ENCODE measurements at regions of chr1 and their contacts with region 1.

Region 1: GRCh38 chr1:160830321-160831153 is 32.1 kb downstream of the CD244 start:
- DNase-seq: peak; percentile 93
- ATAC-seq: peak; percentile 60
- H3K4me3 ChIP-seq: no peak overlapping the region
- H3K27ac ChIP-seq: no peak overlapping the region
- H3K4me1 ChIP-seq: peaks cover 43% of the 10 kb centered on the region
- H3K27me3 ChIP-seq: no peaks in the 10 kb centered on the region
- CTCF ChIP-seq: peak; percentile 98

Region 2: DNA sequence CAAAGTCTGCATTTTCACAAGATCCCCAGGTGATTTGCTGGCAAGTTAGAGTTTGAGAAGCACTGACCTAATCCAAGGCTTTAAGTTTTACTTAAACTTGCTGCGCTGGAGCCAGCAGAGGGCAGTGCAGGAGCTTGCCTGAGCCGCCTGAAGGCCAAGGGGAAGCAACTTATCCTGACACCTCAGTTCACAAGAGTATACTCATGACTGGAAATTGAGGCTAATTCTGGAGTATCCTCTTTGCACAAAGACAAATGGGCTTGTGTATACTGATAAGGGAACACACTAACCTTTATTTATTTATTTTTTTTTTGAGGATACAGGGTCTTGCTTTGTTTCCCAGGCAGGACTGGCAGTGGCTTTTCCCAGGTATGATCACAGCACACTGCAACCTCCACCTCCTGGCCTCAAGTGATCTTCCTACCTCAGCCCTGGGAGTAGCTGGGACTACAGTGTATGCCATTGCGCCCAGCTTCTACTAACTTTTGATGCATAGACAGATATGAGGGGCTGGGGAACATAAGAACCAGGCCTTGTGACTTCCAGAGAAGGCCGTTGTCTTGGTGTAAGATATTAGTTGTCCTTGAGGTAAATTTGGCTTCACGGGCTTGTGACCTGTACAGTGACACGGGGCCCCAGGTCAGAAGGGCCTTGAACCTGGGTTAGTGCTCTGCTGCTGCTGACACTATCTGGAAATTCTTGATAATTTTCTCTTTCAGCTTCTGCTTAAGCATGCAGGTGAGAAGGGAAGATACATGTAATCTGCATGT is 154.7 kb before region 1 on chr1:
- CTCF ChIA-PET with region 1: no interaction called
- POLR2A ChIA-PET with region 1: no interaction called
- intact Hi-C with region 1: loop called (anchors 1 kb)
- DNase-seq: peak; percentile 78
- ATAC-seq: peak; percentile 99
- H3K4me3 ChIP-seq: no peak overlapping the region
- H3K27ac ChIP-seq: no peak overlapping the region
- H3K4me1 ChIP-seq: no peaks in the 10 kb centered on the region
- H3K27me3 ChIP-seq: peaks cover 60% of the 10 kb centered on the region
- CTCF ChIP-seq: peak; percentile 95

Region 3: DNA sequence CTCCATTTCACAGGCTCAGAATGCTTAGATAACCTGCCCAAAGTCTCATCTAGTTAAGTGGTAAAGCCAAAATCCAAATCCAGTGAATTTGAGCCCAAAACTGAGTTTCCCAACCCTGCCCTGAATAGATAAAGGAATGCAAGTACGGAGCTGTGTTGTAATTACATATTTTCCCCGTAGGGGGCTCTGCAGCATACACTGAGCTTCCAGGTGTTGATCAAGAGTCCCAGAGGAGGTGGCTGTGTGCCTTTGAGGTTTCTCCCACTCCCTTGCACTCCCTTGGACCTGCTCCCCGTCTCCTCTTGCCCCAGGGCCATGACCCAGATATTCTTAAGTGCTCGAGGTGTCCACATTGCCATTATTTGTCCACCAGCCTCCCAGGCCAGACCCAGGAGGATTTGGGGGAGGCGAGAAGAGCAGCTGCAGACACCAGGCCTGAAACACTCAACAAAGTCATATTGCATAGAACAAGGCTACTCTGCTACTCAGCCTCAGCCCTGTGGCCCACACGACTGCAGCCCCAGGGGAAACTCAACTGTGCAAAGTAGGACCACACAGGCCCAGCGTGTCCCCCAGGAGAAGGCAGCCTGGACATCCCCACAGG is 52.9 kb before region 1 on chr1:
- CTCF ChIA-PET with region 1: no interaction called
- POLR2A ChIA-PET with region 1: no interaction called
- intact Hi-C with region 1: loop called (anchors 2 kb)
- DNase-seq: peak; percentile 70
- ATAC-seq: peak; percentile 53; the same call in 1 of the 2 replicates
- H3K4me3 ChIP-seq: no peak overlapping the region
- H3K27ac ChIP-seq: no peak overlapping the region
- H3K4me1 ChIP-seq: peaks cover 28% of the 10 kb centered on the region
- H3K27me3 ChIP-seq: no peaks in the 10 kb centered on the region
- CTCF ChIP-seq: peak; percentile 75

Region 4: GRCh38 chr1:161068306-161069234 is 238.0 kb after region 1 on chr1:
- CTCF ChIA-PET with region 1: no interaction called
- POLR2A ChIA-PET with region 1: no interaction called
- intact Hi-C with region 1: no loop called
- DNase-seq: no peak
- ATAC-seq: peak; percentile 41
- H3K4me3 ChIP-seq: no peak overlapping the region
- H3K27ac ChIP-seq: no peak overlapping the region
- H3K4me1 ChIP-seq: no peaks in the 10 kb centered on the region
- H3K27me3 ChIP-seq: no peaks in the 10 kb centered on the region
- CTCF ChIP-seq: no peak